KBM-7 (cell line): ENCODE measurements at regions of chr9 and their contacts with region 1.

Region 1: GRCh38 chr9:122464633-122465567 is 12.8 kb downstream of the OR1J1 start:
- DNase-seq: peak; percentile 80

Region 2: DNA sequence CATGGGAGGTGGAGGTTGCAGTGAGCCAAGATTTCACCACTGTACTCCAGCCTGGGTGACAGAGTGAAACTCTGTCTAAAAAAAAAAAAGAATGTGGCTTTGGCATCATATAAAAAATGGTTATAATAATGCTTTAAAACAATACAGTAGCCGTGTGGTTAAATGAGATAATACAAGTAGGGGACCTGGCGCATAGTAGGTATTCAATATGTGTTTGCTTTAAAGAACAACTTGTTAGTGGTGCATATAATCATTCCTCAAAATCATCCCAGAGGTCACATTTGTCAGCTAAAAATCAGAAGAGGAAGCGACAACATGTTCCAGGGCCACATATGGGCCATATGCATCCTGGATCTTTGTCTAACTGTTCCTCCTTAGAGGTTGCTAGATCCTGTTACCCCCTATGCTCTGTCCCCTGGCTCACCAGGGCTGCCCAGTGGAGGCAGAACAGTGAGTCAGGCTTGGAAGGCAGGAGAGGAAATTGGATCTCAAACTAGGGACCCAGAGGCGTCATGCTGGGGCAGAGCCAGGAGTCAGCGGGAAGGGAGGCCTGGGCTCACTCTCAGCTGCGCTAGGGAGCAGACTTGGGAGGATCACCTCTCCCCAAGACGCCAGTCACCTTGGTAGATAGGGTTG is 263.8 kb before region 1 on chr9:
- in situ Hi-C with region 1: no loop called
- DNase-seq: peak; percentile 26

Region 3: GRCh38 chr9:122807271-122807930 is 342.5 kb after region 1 on chr9:
- in situ Hi-C with region 1: loop called (anchors 10 kb)
- DNase-seq: no peak